ENCODE measurements at regions of chr3 and their contacts with region 1.

Region 1: DNA sequence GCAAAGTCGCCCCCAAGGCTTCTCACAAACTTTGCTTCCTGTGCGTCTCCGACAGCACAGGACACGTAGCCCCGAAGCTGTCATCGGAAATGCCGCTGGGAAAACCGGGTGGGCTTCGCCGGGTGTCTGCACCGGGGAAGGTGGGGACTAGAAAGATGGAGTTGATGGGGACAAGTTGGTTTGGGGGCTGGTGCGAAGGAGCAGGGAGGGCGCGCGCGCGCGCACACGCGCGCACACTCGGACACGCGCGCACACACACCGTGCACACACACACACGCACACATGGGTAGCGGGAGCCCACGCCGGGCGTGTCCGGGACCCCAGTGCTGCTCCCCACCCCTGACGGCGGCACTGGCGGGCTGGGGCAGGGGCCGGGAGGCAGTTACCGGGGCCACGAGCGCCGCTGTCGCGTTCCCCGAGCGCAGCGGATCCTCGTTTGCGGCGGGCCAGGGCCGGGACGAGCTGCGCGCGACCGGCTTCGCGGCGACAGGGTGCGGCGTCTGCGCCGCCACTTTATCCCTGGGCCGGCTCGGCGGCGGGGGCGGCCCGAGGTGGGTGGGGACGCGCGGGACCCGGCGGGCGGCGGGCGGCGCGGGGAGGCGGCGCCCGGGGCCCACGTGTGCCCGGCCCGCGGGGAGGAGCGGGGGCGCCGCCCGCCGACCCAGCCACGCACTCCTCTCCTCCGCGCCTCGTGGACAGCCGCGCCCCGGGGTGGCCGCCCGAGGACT is 547 bp upstream of the MGLL start:
- DNase-seq: peak in 1 of 2 experiments; percentile 49
- H3K4me3 ChIP-seq: peak overlapping the region; percentile 76
- H3K27ac ChIP-seq: peak overlapping the region; percentile 93
- H3K4me1 ChIP-seq: peaks cover 44% of the 10 kb centered on the region
- H3K27me3 ChIP-seq: no peaks in the 10 kb centered on the region
- CTCF ChIP-seq: no peak

Region 2: DNA sequence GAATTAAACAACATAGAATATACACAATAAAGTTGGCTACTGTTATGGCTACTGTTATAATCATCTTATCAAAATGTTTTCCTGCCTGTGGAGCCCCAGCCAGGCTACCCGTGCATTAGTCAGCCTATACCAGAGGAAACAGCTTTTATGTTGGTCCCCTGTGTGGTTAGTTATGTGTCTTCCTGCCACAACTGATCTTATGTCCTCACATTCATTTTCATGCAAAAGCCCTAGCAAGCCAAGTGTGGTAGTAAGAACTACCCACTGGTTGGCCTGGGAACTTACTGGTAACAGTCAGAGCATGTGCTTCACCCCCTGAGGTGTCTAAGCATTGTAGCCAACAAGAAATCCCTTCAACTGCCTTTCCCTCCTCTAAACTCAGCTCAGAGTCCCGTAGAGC is 22.4 kb before region 1 on chr3:
- CTCF ChIA-PET with region 1: interaction called, 12 read pairs
- POLR2A ChIA-PET with region 1: no interaction called
- intact Hi-C with region 1: no loop called
- DNase-seq: no peak
- H3K4me3 ChIP-seq: no peak overlapping the region
- H3K27ac ChIP-seq: peak overlapping the region; percentile 91
- H3K4me1 ChIP-seq: peaks cover 44% of the 10 kb centered on the region
- H3K27me3 ChIP-seq: no peaks in the 10 kb centered on the region
- CTCF ChIP-seq: no peak

Region 3: GRCh38 chr3:127959846-127960245 is 137.0 kb after region 1 on chr3:
- CTCF ChIA-PET with region 1: no interaction called
- POLR2A ChIA-PET with region 1: no interaction called
- intact Hi-C with region 1: loop called (anchors 1 kb)
- DNase-seq: peak; percentile 69 to 85
- H3K4me3 ChIP-seq: no peak overlapping the region
- H3K27ac ChIP-seq: no peak overlapping the region
- H3K4me1 ChIP-seq: peaks cover 34% of the 10 kb centered on the region
- H3K27me3 ChIP-seq: no peaks in the 10 kb centered on the region
- CTCF ChIP-seq: peak; percentile 63